ENCODE measurements at regions of chr13 and their contacts with region 1.

Region 1: DNA sequence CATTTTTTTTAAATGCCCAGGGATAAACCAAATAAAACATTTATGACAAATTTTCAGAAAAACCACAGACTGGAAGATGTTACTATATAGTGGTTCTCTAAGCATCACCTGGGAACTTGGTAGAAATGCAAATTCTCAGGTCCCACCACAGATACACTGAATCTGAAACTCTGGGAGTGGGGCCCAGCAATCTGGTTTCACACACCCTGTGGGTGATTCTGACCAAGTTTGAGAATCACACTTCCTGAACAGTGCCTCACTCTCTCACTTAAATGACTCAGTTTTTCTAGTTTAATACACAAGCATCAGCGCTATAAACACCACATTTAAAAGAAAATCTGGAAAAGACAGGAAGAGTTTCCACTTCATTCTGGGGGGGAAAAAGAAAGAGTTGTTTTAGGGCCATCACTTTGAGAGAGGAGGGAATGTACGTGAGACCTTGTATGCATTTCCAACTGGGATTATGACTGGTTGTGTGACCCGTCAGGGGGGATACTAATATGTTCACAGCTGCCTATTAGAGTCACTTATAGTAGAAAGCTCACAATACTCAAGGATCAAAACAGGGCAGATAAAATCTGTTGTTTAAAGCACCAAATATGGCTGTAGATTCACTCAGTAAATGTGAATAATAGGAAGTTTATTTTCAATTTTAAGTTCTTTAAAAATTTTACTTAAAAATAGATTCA is 567.7 kb downstream of the GPC6 start:
- DNase-seq: peak; percentile 5
- H3K4me3 Mint-ChIP-seq: no peak overlapping the region
- H3K27ac Mint-ChIP-seq: peak overlapping the region; percentile 59
- H3K4me1 Mint-ChIP-seq: peaks cover 10% of the 10 kb centered on the region
- H3K27me3 Mint-ChIP-seq: peaks cover 5% of the 10 kb centered on the region

Region 2: DNA sequence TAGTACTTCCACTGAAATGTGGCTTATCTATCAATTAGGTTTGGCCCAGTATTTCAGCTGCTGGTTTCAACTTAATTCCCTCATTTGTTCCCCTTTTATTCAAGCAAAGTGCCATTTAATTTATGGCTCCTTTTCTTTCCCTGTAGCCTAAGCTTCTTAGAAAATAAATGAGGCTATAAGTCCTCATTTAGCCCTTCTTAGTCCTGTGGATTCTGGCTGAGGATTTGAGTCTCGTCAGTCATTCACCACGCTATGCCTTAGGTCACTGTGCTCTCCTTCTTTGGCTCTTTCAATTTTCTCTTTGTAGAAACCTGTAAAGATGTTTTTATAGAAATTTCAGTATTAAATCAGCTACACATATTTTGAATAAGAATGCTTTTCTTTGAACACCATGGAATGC is 11.4 kb after region 1 on chr13:
- intact Hi-C with region 1: no loop called
- DNase-seq: no peak
- H3K4me3 Mint-ChIP-seq: no peak overlapping the region
- H3K27ac Mint-ChIP-seq: no peak overlapping the region
- H3K4me1 Mint-ChIP-seq: no peaks in the 10 kb centered on the region
- H3K27me3 Mint-ChIP-seq: peaks cover 6% of the 10 kb centered on the region

Region 3: GRCh38 chr13:94351292-94351990 is 557.1 kb after region 1 on chr13:
- intact Hi-C with region 1: loop called (anchors 1 kb)
- DNase-seq: no peak
- H3K4me3 Mint-ChIP-seq: no peak overlapping the region
- H3K27ac Mint-ChIP-seq: peak overlapping the region; percentile 57
- H3K4me1 Mint-ChIP-seq: peaks cover 23% of the 10 kb centered on the region
- H3K27me3 Mint-ChIP-seq: peaks cover 3% of the 10 kb centered on the region

Measured in activated T-helper 1 cell treated with anti-CD3 and anti-CD28 coated beads, Interleukin-12 subunit alpha, Interleukin-12 subunit beta, Interleukin-2, Interleukin-4 antibody, amounts not matched to agents 30 ng/mL and 10 ng/mL and 1 ng/mL, durations not matched to agents 14 hours and 24 hours and 36 hours (primary cell).